HepG2 (cell line): ENCODE measurements at regions of chr16 and their contacts with region 1.

Region 1: DNA sequence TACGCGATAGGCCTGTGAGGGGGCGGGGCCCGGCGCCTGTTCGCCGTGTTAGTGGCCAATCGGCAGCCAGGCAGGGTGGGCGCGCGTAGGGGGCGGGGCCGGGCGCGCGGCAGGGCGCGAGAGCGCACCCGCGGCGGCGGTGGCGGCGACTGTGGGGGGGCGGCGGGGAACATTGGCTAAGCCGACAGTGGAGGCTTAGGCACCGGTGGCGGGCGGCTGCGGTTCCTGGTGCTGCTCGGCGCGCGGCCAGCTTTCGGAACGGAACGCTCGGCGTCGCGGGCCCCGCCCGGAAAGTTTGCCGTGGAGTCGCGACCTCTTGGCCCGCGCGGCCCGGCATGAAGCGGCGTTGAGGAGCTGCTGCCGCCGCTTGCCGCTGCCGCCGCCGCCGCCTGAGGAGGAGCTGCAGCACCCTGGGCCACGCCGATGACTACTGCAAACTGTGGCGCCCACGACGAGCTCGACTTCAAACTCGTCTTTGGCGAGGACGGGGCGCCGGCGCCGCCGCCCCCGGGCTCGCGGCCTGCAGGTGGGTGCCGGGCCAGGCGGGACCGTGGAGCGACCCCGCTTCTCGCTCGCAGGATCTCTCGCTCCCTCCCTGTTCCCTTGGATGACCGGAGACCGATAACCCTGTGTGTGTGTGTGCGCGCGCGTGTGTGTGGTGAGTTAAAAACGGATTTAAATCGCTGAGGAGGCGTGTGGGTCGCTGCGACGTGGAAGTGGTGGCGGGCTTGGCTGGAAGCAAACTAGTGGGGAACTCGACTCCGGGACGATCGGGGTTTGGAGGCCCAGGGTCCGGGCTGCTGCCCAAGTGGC is at the start of gene NFATC3:
- DNase-seq: peak; percentile 96
- ATAC-seq: peak; percentile 50
- H3K4me3 ChIP-seq: peak within 1 kb of the TSS; percentile 90 to 98 (median 96)
- H3K27ac ChIP-seq: peak within 1 kb of the TSS; percentile 99
- H3K4me1 ChIP-seq: peaks cover 67% of the 10 kb centered on the region
- H3K27me3 ChIP-seq: no peaks in the 10 kb centered on the region; a peak in 1 of 5 replicates
- CTCF ChIP-seq: no peak
- EP300 ChIP-seq: peak in 1 of 2 experiments; percentile 6; a peak in 1 of 4 replicates
- POLR2A ChIP-seq: peak in 1 of 2 experiments; percentile 61; a peak in 2 of 4 replicates
- RAD21 ChIP-seq: peak; percentile 70
- total RNA-seq, gene NFATC3: 52.6 and 63.2 TPM in 2 replicates

Region 2: DNA sequence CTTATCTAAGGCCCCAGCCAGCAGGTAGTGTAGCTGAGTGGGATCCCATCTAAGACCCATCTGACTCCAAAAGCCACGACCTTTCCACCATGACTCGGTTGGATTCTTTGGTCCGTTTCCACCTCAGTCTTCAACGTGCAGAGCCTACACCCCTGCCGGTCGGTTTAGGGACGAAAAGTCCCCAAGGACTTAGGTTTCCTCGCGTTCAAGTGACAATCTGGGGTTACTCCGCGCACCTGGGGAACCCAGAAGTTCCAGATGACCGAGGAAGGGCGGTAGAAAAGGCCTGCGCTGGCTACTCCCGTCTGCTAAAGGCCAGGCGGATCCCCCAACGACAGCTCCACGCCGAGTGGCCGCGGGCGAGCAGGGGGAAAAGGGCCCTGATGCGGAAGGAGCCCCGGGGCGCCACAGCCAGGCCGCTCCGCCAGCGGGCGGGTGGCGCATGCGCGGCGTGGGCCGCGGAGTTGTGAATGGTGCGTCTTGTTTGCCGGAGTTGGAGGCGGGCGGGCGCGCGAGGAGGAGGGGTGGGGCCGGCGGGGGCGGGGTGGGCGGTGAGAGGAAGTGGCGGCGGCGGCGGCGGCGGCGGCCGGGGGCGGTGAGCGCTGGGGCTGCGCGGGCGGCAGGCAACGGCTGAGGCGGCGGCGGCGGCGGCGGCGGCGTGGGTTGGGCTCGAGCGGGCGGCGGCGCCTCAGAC is 1056.8 kb before region 1 on chr16 and contains the start of gene CBFB:
- CTCF ChIA-PET with region 1: no interaction called
- POLR2A ChIA-PET with region 1: no interaction called
- in situ Hi-C with region 1: no loop called
- intact Hi-C with region 1: loop called (anchors 10 kb)
- DNase-seq: peak; percentile 90
- ATAC-seq: peak; percentile 89
- H3K4me3 ChIP-seq: peak within 1 kb of the TSS; percentile 96 to 99 (median 98)
- H3K27ac ChIP-seq: peak within 1 kb of the TSS; percentile 97
- H3K4me1 ChIP-seq: peaks cover 80% of the 10 kb centered on the region
- H3K27me3 ChIP-seq: no peaks in the 10 kb centered on the region; a peak in 1 of 5 replicates
- CTCF ChIP-seq: peak; percentile 47; the same call in 1 of the 2 replicates
- EP300 ChIP-seq: no peak
- POLR2A ChIP-seq: peak; percentile 95 to 99
- RAD21 ChIP-seq: peak; percentile 54; the same call in 1 of the 2 replicates
- total RNA-seq, gene CBFB: 70.8 and 76.0 TPM in 2 replicates

Region 3: GRCh38 chr16:67942200-67942509 is 143.3 kb before region 1 on chr16:
- CTCF ChIA-PET with region 1: no interaction called
- POLR2A ChIA-PET with region 1: interaction called, 18 read pairs
- in situ Hi-C with region 1: no loop called
- intact Hi-C with region 1: no loop called
- DNase-seq: peak; percentile 61
- ATAC-seq: peak; percentile 44
- H3K4me3 ChIP-seq: no peak overlapping the region
- H3K27ac ChIP-seq: peak overlapping the region; percentile 85
- H3K4me1 ChIP-seq: peaks cover 59% of the 10 kb centered on the region
- H3K27me3 ChIP-seq: no peaks in the 10 kb centered on the region
- CTCF ChIP-seq: peak; percentile 91
- EP300 ChIP-seq: no peak
- POLR2A ChIP-seq: no peak
- RAD21 ChIP-seq: peak; percentile 53; the same call in 1 of the 2 replicates

Region 4: DNA sequence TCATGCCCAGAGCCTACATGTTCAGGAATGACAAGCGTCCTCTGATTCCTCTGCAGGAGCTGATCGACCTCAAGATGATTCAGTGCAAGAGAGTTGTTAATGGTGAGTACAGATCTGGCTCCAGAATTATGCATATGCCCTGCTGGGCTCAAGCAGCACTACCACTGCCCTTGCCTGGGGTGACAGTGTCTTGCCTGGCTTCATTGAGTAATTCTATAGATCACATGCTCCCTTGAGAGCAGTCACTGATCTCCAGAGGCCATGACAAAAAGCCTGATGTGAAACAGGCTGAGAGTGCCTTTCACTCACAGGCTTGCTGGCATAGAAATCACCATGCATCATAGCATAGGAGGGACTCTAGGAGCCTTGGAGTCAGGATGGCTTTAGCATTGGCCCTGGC is 36.0 kb before region 1 on chr16:
- CTCF ChIA-PET with region 1: no interaction called
- POLR2A ChIA-PET with region 1: interaction called, 27 read pairs
- in situ Hi-C with region 1: no loop called
- intact Hi-C with region 1: no loop called
- DNase-seq: no peak
- ATAC-seq: no peak
- H3K4me3 ChIP-seq: no peak overlapping the region
- H3K27ac ChIP-seq: no peak overlapping the region
- H3K4me1 ChIP-seq: peaks cover 21% of the 10 kb centered on the region
- H3K27me3 ChIP-seq: no peaks in the 10 kb centered on the region
- CTCF ChIP-seq: no peak
- EP300 ChIP-seq: no peak
- POLR2A ChIP-seq: no peak
- RAD21 ChIP-seq: no peak

Region 5: DNA sequence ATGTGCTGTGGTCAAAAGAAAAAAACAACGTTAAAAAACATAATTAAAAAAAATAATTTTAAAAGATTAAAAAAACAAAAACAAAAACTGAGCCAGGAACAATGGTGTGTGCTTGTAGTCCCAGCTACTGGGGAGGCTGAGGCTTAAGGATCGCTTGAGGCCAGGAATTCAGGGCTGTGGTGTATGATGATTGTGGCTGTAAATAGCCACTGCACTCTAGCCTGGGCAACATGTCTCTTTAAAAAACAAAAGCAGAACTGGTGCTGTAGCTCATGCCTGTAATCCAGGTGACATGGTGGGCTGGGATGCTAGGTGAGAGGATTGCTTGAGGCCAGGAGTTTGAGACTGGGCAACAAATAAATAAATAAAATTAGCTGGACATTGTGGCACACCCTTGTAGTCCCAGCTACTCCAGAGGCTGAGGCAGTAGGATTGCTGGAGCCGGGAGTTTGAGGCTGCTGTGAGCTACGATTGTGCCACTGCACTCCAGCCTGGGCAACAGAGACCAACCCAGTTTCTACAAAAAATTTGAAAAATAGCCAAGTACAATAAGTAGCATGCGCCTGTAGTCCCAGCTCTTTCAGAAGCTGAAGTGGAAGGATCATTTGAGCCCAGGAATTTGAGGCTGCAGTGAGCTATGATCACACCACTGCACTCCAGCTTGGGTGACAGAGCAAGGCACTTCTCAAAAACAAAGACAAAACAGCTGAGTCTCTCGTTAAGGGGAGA is 43.3 kb after region 1 on chr16:
- CTCF ChIA-PET with region 1: no interaction called
- POLR2A ChIA-PET with region 1: interaction called, 11 read pairs
- in situ Hi-C with region 1: no loop called
- intact Hi-C with region 1: loop called (anchors 5 kb)
- DNase-seq: peak; percentile 35
- ATAC-seq: peak; percentile 71
- H3K4me3 ChIP-seq: no peak overlapping the region
- H3K27ac ChIP-seq: peak overlapping the region; percentile 53
- H3K4me1 ChIP-seq: peaks cover 55% of the 10 kb centered on the region
- H3K27me3 ChIP-seq: no peaks in the 10 kb centered on the region
- CTCF ChIP-seq: no peak
- EP300 ChIP-seq: no peak
- POLR2A ChIP-seq: no peak
- RAD21 ChIP-seq: no peak

Region 6: DNA sequence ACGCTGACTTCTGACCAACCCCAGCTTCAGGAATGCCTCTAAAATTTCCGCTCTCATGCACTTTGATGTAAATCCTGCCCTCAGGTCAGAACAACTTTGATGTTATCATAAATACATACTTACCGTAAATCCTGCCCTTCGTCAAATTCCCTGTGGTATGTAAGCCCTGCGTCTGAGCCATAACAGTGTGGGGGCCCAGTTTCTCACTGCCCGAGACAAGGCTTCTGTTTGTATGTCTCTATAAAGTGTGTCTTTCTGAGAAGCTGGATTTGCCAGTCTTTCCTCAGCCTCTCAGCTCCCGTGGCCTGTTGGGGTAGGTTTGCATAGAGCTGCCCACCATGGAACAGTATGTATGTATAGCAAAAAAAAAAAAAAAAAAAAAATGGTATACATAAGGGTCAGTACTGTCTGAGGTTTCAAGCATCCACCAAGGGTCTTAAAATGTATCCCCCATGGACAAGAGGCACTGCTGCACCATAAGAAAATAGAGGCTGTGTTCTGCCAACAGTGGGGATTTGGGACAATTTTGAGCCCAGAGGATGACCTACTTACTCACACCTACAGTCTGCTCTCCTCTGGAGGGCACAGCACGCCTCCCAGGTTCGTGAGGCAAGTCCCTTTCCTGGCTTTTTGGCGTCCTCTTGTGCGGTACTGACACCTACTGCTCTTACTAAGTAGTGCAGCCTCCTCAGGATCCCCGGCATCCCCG is 242.8 kb after region 1 on chr16:
- CTCF ChIA-PET with region 1: no interaction called
- POLR2A ChIA-PET with region 1: interaction called, 4 read pairs
- in situ Hi-C with region 1: loop called (anchors 10 kb)
- intact Hi-C with region 1: loop called (anchors 5 kb)
- DNase-seq: peak; percentile 88
- ATAC-seq: peak; percentile 86
- H3K4me3 ChIP-seq: no peak overlapping the region; a peak in 1 of 6 replicates
- H3K27ac ChIP-seq: peak overlapping the region; percentile 50
- H3K4me1 ChIP-seq: peaks cover 54% of the 10 kb centered on the region
- H3K27me3 ChIP-seq: no peaks in the 10 kb centered on the region
- CTCF ChIP-seq: peak; percentile 96
- EP300 ChIP-seq: peak in 1 of 2 experiments; percentile 82; a peak in 2 of 4 replicates
- POLR2A ChIP-seq: no peak
- RAD21 ChIP-seq: peak; percentile 96